Activated naive CD8-positive, alpha-beta T cell treated with anti-CD3 and anti-CD28 coated beads, Interleukin-2, amount 10 ng/mL, durations not matched to agents 7 days and 5 days (primary cell): ENCODE measurements at regions of chr14 and their contacts with region 1.

Region 1: DNA sequence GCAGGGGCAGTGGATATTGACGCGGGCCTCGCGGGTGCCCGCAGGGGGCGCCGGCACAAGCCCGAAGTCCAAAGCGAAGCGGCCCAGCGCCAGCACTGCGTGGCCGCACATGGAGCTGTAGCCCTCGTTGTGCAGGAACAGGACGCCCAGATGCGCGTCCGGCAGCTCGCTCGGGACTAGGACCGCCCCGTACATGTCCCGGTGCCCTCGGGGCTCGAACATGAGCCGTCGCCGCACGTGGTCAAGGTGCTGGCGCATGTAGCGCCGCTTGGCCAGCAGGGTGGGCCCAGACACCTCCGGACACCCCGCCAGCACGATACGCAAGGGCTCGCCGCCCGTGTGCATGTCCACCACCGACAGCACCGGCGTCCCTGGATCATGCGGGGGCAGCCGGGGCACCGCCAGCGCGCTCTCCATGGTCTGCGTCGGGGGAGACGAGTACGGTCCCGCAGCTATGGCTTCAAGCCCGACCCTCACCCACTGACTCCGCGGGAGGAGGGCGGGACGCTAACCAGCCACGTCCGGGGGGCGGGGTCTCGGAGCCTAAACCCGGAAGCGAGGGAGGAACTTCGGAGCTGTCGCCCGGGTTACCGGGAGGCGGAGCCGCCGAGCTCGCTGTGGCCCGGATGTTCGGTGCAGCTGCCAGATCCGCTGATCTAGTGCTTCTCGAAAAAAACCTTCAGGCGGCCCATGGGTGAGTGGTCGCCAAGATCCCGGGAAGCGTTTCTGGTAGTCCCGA is at the starts of genes JKAMP and L3HYPDH:
- DNase-seq: peak; percentile 98
- ATAC-seq: peak; percentile 88
- H3K4me3 Mint-ChIP-seq: peak within 1 kb of the TSS; percentile 92
- H3K27ac Mint-ChIP-seq: peak within 1 kb of the TSS; percentile 91
- H3K4me1 Mint-ChIP-seq: peaks cover 47% of the 10 kb centered on the region
- H3K27me3 Mint-ChIP-seq: no peaks in the 10 kb centered on the region
- total RNA-seq, gene JKAMP: 31.5 to 35.9 TPM
- total RNA-seq, gene L3HYPDH: 23.5 to 32.8 TPM

Region 2: DNA sequence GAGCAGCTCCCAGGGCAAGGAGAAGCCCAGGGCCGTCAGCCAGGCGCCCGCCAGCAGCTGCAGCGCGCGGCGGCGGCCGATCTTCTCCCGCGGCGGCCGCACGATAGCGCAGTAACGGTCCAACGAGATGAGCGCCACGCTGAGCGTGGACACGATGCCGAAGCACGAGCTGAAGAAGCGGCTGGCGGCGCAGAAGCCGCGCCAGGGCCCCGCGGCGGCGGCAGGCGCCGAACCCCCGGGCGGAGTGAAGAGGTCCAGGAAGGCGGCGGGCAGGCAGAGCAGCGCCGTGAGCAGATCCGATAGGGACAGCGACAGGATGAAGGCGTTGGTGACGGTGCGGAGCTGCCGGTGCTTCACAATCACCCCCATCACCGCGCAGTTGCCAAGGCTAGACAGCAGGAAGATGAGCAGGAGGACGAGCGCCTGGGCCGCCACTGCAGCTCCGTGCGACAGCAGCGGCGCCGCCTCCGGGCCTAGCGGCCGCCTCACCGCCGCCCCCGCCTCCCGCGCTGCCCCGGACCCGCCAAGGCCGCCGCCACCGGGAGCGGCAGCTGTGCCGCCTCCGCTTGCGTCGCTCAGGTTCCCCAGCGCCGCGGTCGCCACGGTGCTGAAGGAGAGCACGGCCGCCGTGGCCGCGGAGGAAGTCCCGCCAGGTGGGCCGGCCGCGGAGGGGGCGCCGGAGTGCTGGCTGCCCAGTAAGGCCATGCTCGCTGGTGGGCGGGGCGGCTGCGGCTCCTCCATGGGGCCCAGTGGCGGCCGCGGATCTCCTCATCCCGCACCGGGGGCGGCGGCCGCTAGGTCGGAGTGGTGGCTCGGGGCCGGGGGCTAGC is 19.4 kb before region 1 on chr14:
- POLR2A ChIA-PET with region 1: interaction called, 20 read pairs
- DNase-seq: peak; percentile 72
- ATAC-seq: peak; percentile 80
- H3K4me3 Mint-ChIP-seq: peak overlapping the region; percentile 88
- H3K27ac Mint-ChIP-seq: peak overlapping the region; percentile 35
- H3K4me1 Mint-ChIP-seq: peaks cover 9% of the 10 kb centered on the region
- H3K27me3 Mint-ChIP-seq: no peaks in the 10 kb centered on the region